ENCODE measurements at regions of chr6 and their contacts with region 1.

Region 1: GRCh38 chr6:26204332-26205165 is 117.3 kb downstream of the HFE start:
- DNase-seq: peak; percentile 95
- H3K4me3 Mint-ChIP-seq: no peak overlapping the region
- H3K27ac Mint-ChIP-seq: no peak overlapping the region
- H3K4me1 Mint-ChIP-seq: peaks cover 38% of the 10 kb centered on the region
- H3K27me3 Mint-ChIP-seq: peaks cover 2% of the 10 kb centered on the region

Region 2: GRCh38 chr6:26183581-26184366 is 20.8 kb before region 1 on chr6:
- CTCF ChIA-PET with region 1: interaction called, 59 read pairs
- POLR2A ChIA-PET with region 1: interaction called, 96 read pairs
- DNase-seq: peak; percentile 75
- H3K4me3 Mint-ChIP-seq: peak overlapping the region; percentile 91
- H3K27ac Mint-ChIP-seq: peak overlapping the region; percentile 99
- H3K4me1 Mint-ChIP-seq: peaks cover 73% of the 10 kb centered on the region
- H3K27me3 Mint-ChIP-seq: no peaks in the 10 kb centered on the region

Measured in activated CD4-positive, alpha-beta T cell treated with anti-CD3 and anti-CD28 coated beads, Interleukin-2, amount 10 ng/mL, durations not matched to agents 7 days and 5 days (primary cell).